ENCODE measurements at regions of chr2 and their contacts with region 1.

Region 1: DNA sequence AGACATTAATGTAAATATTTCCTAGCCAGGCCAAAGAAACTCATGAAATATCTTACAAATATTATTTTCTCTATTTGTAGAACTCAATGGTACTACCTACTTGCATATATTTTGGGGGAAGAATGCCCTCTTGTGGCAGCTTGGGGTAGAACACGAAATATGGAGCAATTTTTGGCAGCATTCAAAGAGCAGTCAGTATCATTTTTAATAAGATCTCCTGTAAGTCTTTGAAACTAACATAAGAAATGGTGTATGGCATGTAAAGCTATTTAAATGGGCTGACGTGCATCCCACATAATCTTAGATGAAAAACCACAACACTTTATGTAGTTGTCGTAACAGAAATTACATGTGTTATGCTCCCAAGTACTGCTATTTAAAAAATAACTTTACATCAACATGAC is 62.3 kb upstream of the CCDC195 start:
- DNase-seq: peak in 1 of 3 donors; percentile 84
- ATAC-seq: no peak
- H3K4me3 ChIP-seq: no peak overlapping the region
- H3K4me1 ChIP-seq: peaks cover 21% of the 10 kb centered on the region
- CTCF ChIP-seq: peak; percentile 59

Region 2: GRCh38 chr2:224357098-224357901 is 421.2 kb before region 1 on chr2:
- intact Hi-C with region 1: loop called in 1 of 2 experiments (anchors 5 kb)
- DNase-seq: peak in 1 of 3 donors; percentile 81
- ATAC-seq: peak; percentile 85
- H3K4me3 ChIP-seq: no peak overlapping the region
- H3K4me1 ChIP-seq: no peaks in the 10 kb centered on the region
- CTCF ChIP-seq: peak; percentile 39

Region 3: DNA sequence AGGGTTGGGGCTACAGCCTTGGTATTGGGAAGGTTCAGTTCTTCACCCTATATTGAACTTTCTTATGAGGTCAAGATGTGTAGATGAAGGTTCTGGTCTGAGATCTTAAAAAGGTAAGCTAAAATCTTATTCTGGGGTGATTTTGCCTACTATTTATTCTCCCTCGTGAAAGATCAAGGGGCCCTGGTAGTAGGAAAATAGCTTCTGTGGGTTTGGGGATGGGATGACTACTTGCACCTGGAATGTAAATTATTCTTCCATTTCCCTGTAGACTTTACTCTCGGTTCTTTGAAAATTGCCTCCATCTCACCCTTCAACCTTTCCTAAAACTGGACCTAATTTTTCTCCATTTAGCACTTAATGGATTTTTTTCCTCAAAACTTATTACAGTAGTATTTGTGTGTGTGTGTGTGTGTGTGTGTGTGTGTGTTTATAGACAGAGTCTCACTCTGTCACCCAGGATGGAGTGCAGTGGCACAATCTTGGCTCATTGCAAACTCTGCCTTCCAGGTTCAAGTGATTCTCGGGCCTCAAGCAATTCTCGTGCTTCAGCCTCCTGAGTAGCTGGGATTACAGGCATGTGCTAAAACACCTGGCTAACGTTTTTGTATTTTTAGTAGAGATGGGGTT is 99.7 kb before region 1 on chr2:
- intact Hi-C with region 1: loop called in 1 of 2 experiments (anchors 10 kb)
- DNase-seq: no peak
- ATAC-seq: peak; percentile 73
- H3K4me3 ChIP-seq: no peak overlapping the region
- H3K4me1 ChIP-seq: peaks cover 4% of the 10 kb centered on the region
- CTCF ChIP-seq: no peak

Region 4: DNA sequence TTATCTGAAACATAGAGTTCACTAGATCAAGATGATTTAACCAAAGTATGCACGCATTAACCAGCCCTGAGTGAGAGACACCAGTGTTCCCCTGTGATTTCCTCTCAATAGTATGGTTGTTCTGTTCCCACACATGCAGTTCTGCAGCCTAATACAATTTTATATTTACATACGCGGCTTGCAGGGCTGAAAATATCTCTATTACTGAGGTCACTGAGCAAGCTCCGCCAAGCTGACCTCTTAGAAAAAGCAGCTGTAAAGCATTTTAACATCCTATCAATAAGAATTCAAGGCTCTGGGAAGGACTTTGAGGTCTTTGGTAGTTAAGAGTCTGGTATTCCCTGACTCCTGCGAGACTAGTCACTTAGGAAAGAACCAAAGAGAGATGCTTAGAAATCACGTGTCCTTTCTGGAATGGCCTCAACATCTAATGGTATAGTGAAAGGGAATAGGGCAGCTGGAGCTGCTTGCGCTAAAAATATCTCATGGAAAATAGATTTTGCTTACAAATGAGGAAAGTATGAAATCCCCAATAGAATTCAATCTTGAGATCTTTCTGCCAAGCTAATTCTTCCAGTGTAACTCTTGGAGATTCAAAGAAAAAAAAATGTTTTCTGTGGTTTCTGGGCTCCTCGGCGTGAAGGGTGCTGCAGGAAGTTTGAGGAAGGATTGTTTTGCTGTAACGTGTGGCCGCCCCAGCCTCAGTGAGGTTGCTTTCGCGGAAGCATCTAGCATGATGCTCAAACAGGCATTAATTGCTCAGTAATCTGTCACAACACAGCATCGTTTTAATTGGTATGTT is 204.6 kb after region 1 on chr2:
- intact Hi-C with region 1: no loop called
- DNase-seq: peak in 2 of 3 donors; percentile 35 to 67
- ATAC-seq: peak; percentile 74
- H3K4me3 ChIP-seq: no peak overlapping the region
- H3K4me1 ChIP-seq: peaks cover 4% of the 10 kb centered on the region
- CTCF ChIP-seq: no peak